Right cardiac atrium (tissue), 5 donors: ENCODE measurements at regions of chr4 and their contacts with region 1.

Region 1: DNA sequence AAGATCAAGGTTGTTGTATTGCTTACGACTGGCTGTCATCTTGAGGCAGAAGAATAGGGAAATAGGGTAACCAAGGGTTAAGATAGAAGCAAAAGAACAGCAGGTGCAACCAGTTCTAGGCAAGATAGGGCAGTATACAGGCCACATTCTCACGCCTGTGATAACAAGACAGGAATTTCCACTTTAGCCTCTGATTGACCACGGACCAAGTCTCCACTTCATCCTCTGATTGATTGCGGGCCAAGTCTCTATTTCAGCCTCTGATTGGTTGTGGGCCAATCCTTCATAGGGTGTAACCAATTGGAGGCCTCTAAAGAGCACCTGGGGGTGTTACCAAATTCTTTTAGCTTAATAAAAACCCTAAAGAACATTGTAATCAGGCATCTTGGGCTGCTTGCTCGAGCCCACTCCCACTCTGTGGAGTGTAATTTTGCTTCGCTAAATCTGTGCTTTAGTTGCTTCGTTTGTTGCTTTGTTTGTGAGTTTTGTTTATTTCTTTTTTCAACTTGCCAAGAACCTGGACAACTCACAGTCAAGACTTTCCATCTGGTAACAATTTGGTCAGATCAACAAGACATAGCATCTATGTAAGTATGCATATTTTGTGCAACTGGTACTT is 8.7 kb upstream of the TBC1D9 start:
- DNase-seq: no peak
- ATAC-seq: peak in 1 of 2 donors; percentile 67
- H3K4me3 ChIP-seq: no peak overlapping the region
- H3K27ac ChIP-seq: no peak overlapping the region
- H3K4me1 ChIP-seq: no peaks in the 10 kb centered on the region
- H3K27me3 ChIP-seq: no peaks in the 10 kb centered on the region

Region 2: GRCh38 chr4:140653718-140654494 is 111.0 kb before region 1 on chr4:
- intact Hi-C with region 1: loop called in 1 of 4 experiments (anchors 10 kb)
- DNase-seq: peak in 1 of 3 donors; percentile 50
- ATAC-seq: peak; percentile 82 to 87
- H3K4me3 ChIP-seq: peak overlapping the region; percentile 25
- H3K27ac ChIP-seq: no peak overlapping the region
- H3K4me1 ChIP-seq: no peaks in the 10 kb centered on the region
- H3K27me3 ChIP-seq: no peaks in the 10 kb centered on the region

Region 3: GRCh38 chr4:140718241-140718952 is 46.5 kb before region 1 on chr4:
- intact Hi-C with region 1: no loop called
- DNase-seq: no peak
- ATAC-seq: no peak
- H3K4me3 ChIP-seq: no peak overlapping the region
- H3K27ac ChIP-seq: no peak overlapping the region
- H3K4me1 ChIP-seq: no peaks in the 10 kb centered on the region
- H3K27me3 ChIP-seq: no peaks in the 10 kb centered on the region